Lower lobe of right lung (tissue), 2 donors: ENCODE measurements at regions of chr11 and their contacts with region 1.

Region 1: DNA sequence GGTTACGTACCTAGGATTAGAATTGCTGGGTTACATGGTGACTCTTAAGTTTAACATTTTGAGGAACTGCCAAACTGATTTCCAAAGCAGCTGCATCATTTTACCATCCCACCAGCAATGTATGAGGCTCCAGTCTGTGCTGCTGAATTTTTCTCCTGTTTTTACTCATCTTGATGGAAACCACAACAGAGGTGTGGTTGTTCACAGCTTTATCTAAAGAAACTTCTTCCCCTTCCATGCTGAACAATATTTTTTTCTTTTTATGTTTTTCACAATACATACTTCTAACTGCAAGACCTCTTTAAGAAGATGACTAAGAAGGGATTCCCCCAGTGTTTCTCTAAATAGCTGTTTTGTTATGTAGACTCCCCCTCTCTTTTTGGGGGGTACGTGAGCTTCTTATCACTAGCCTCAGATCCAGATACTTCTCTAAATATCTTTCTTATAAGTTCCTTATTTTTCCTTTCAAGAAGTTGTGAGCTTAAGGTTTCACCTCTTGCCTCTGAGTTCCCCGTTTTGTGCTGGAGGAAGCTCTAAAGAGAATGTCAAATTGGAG is 24.0 kb downstream of the TCP11L1 start:
- DNase-seq: no peak
- ATAC-seq: no peak
- H3K4me3 ChIP-seq: no peak overlapping the region
- H3K27ac ChIP-seq: peak overlapping the region; percentile 5
- H3K4me1 ChIP-seq: peaks cover 21% of the 10 kb centered on the region
- H3K27me3 ChIP-seq: no peaks in the 10 kb centered on the region
- CTCF ChIP-seq: no peak

Region 2: DNA sequence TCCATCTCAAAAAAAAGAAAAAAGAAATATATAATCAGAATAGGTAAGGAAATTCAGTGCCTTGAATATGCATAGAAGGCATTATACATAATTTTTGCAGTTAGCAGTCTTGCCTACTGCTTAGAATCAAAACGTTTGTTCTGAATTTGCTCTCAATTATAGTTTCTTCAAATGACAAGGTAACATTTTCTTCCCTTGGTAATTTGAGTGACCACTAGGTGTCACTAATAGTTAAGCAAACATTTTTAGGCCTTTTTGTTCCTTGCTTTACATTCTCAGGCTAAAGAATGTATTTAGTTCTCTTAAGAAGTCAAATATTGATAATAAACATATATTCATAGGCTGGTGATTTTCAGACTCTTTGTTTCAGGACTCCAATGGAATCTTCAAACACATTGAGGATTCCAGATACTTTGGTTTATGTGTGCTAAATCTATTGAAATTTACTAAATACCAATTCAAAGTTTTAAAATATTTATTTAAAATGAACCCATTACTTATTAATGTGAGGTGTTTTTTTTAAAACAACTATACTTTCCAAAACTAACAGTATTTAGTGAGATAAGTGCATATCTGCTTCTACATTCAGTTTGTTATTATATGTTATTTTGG is 102.7 kb before region 1 on chr11:
- intact Hi-C with region 1: loop called (anchors 5 kb)
- DNase-seq: no peak
- ATAC-seq: no peak
- H3K4me3 ChIP-seq: no peak overlapping the region
- H3K27ac ChIP-seq: no peak overlapping the region
- H3K4me1 ChIP-seq: no peaks in the 10 kb centered on the region
- H3K27me3 ChIP-seq: no peaks in the 10 kb centered on the region
- CTCF ChIP-seq: peak; percentile 75